Stomach (tissue), 19 donors: ENCODE measurements at regions of chr3 and their contacts with region 1.

Region 1: GRCh38 chr3:141303481-141304223 is 64.7 kb upstream of the ZBTB38 start:
- DNase-seq: peak; percentile 35 to 93
- H3K4me3 ChIP-seq: no peak overlapping the region
- H3K27ac ChIP-seq: no peak overlapping the region
- H3K4me1 ChIP-seq: peaks cover 0 to 4% (median 0%) of the 10 kb centered on the region in 4 donors
- H3K27me3 ChIP-seq: no peaks in the 10 kb centered on the region
- CTCF ChIP-seq: peak in 5 of 7 experiments; percentile 64 to 95 (median 78)
- EP300 ChIP-seq: no peak
- POLR2A ChIP-seq: no peak

Region 2: GRCh38 chr3:141174674-141175073 is 129.0 kb before region 1 on chr3:
- intact Hi-C with region 1: no loop called
- DNase-seq: no peak
- H3K4me3 ChIP-seq: no peak overlapping the region
- H3K27ac ChIP-seq: no peak overlapping the region
- H3K4me1 ChIP-seq: no peaks in the 10 kb centered on the region
- H3K27me3 ChIP-seq: peaks cover 0 to 6% (median 4%) of the 10 kb centered on the region in 3 donors
- CTCF ChIP-seq: no peak
- EP300 ChIP-seq: no peak
- POLR2A ChIP-seq: no peak

Region 3: DNA sequence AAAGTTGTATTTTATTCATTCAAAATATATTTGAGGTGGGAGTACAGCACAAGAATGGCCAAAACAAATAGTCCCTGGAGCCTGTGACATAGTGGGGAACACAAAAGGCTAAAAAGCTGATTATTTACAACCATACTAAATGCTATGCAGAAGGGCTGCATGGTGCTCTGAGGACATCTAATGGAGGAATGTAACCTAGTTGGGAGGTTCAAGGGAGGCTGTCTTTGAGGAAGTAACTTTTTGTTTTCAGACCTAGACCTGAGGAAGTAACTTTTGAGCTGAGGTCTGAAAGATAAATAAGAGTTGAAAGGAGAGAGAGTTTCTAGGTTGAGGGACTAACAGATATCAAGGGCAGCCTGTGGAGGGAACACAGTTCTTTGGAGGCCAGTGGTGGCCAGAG is 148.4 kb after region 1 on chr3:
- intact Hi-C with region 1: loop called (anchors 10 kb)
- DNase-seq: peak in 1 of 2 donors; percentile 86
- H3K4me3 ChIP-seq: no peak overlapping the region
- H3K27ac ChIP-seq: peak overlapping the region; percentile 24 to 69 (median 38)
- H3K4me1 ChIP-seq: peaks cover 16 to 82% (median 56%) of the 10 kb centered on the region in 4 donors
- H3K27me3 ChIP-seq: no peaks in the 10 kb centered on the region
- CTCF ChIP-seq: peak in 5 of 7 experiments; percentile 9 to 66 (median 41)
- EP300 ChIP-seq: no peak
- POLR2A ChIP-seq: no peak

Region 4: DNA sequence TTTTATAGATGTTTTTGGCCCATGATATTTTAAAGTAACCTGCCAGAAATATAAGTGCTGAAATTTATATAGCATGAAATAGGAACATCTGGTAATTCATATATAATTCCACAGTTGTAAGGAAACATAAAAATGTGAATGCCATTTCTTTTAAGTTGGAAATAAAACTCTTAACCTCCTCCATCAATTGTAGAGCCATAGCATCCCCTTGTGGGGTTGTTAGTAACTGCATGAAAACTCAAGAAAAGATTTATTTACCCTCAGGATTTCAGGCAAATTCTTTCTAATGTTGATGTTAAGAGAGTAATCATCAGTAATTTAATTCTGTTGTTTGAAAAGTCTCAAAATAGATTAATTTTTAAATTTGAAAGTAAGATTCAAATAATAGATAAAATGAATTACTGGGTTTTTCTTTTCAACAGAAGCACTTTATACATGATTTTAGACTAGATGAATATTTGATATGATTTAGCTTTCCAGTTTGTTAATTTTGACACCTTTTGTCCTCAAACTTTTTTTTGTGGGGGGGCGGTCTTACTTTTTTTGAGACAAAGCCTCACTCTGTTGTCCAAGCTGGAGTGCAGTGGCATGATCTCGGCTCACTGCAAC is 257.9 kb after region 1 on chr3:
- intact Hi-C with region 1: loop called (anchors 10 kb)
- DNase-seq: peak in 1 of 2 donors; percentile 86
- H3K4me3 ChIP-seq: no peak overlapping the region
- H3K27ac ChIP-seq: no peak overlapping the region
- H3K4me1 ChIP-seq: peaks cover 0 to 7% (median 0%) of the 10 kb centered on the region in 4 donors
- H3K27me3 ChIP-seq: no peaks in the 10 kb centered on the region
- CTCF ChIP-seq: peak in 5 of 7 experiments; percentile 89 to 98 (median 91)
- EP300 ChIP-seq: no peak
- POLR2A ChIP-seq: no peak